GM12878 (cell line): ENCODE measurements at regions of chr17 and their contacts with region 1.

Region 1: GRCh38 chr17:42183741-42184711 is 1.2 kb downstream of the HCRT start:
- DNase-seq: peak; percentile 23
- ATAC-seq: peak; percentile 79
- H3K4me3 ChIP-seq: peak overlapping the region; percentile 76
- H3K27ac ChIP-seq: no peak overlapping the region; the same call in 1 of the 2 replicates
- H3K4me1 ChIP-seq: peaks cover 27% of the 10 kb centered on the region
- H3K27me3 ChIP-seq: no peaks in the 10 kb centered on the region
- CTCF ChIP-seq: peak; percentile 74 to 90 (median 89)
- EP300 ChIP-seq: no peak
- POLR2A ChIP-seq: peak; percentile 73
- RAD21 ChIP-seq: no peak

Region 2: DNA sequence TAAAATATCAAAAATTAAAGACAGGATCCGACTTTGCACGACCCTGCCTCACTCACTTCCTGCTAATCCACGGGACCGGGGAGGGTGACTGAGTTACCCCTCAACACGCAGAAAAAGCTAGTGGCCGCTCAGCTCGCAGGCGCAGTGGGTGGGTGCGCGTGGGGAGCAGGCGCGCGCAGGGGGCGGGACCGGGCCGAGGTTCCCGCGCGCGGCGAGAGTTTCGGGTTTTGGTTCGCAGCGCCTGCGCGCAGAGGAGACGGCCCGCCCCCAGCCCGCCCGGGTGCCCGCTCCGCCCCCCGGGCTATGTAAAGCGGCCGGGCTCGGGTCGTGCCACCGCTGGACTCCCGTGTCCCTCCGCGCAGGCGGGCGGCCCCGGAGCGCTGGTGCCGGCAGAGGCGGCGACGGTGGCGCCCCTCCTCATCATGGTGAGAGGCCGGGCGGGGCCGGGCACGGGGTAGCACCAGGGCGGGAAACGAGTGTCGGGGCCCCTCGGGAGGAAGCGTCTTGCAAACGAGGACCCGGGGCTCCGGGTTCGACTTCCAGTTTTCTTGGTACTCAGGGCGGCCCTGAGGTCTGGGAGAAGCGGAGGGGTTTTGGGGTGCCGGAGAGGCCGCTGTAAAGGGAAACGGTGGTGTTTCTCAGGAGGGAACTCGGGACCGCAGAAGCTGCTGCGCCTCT is 217.4 kb before region 1 on chr17 and contains the start of gene CNP:
- CTCF ChIA-PET with region 1: interaction called, 21 read pairs
- POLR2A ChIA-PET with region 1: interaction called, 3 read pairs
- RAD21 ChIA-PET with region 1: interaction called, 5 read pairs
- SMC1A ChIA-PET with region 1: interaction called, 6 read pairs
- in situ Hi-C with region 1: no loop called
- intact Hi-C with region 1: loop called (anchors 5 kb)
- DNase-seq: peak; percentile 49
- ATAC-seq: peak; percentile 91
- H3K4me3 ChIP-seq: peak within 1 kb of the TSS; percentile 79
- H3K27ac ChIP-seq: peak within 1 kb of the TSS; percentile 87
- H3K4me1 ChIP-seq: peaks cover 6% of the 10 kb centered on the region
- H3K27me3 ChIP-seq: no peaks in the 10 kb centered on the region
- CTCF ChIP-seq: no peak
- EP300 ChIP-seq: no peak
- POLR2A ChIP-seq: peak; percentile 92
- RAD21 ChIP-seq: no peak
- polyA plus RNA-seq, gene CNP: 1.8 to 4.4 TPM

Region 3: DNA sequence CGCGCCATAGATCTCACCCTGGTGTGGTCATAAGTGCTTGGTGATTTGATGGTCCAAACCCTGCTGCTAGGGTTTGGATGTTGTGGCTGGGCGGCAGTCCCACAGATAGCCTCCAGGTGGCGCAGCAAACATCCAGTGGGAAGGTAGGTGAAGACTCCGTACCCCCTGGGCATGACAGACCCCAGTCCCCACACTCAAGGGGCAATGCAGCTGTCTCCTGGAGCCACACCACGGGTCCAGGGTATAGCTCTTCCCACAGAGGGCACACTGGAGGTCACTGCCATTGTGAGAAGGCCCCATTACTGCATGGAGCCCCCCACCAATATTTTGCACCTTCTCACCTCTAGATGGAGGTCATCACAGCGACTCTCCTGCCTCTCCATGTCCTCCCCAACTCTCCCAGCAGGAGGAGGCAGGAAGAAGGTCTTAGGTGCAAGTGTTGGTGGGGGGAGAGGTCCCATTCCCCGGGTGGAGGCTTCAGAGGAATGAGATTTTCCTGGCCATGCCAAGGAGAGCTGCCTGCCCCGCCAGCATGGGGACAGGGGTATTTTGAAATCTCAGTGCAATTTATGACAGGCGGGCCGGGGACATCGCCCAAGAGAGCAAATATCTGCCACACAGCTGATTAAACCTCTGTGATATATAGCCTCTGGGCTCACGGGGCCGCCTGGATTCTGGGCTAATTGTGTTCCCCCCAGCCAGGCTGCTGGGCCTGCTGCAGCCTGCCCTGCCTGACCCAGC is 116.5 kb before region 1 on chr17:
- CTCF ChIA-PET with region 1: interaction called, 43 read pairs
- POLR2A ChIA-PET with region 1: no interaction called
- RAD21 ChIA-PET with region 1: interaction called, 4 read pairs
- SMC1A ChIA-PET with region 1: interaction called, 3 read pairs
- in situ Hi-C with region 1: no loop called
- intact Hi-C with region 1: loop called (anchors 2 kb)
- DNase-seq: no peak
- ATAC-seq: peak; percentile 70
- H3K4me3 ChIP-seq: no peak overlapping the region
- H3K27ac ChIP-seq: no peak overlapping the region
- H3K4me1 ChIP-seq: peaks cover 11% of the 10 kb centered on the region
- H3K27me3 ChIP-seq: peaks cover 3 to 7% of the 10 kb centered on the region in 2 experiments
- CTCF ChIP-seq: peak; percentile 89 to 95 (median 91)
- EP300 ChIP-seq: no peak
- POLR2A ChIP-seq: no peak
- RAD21 ChIP-seq: peak; percentile 56

Region 4: DNA sequence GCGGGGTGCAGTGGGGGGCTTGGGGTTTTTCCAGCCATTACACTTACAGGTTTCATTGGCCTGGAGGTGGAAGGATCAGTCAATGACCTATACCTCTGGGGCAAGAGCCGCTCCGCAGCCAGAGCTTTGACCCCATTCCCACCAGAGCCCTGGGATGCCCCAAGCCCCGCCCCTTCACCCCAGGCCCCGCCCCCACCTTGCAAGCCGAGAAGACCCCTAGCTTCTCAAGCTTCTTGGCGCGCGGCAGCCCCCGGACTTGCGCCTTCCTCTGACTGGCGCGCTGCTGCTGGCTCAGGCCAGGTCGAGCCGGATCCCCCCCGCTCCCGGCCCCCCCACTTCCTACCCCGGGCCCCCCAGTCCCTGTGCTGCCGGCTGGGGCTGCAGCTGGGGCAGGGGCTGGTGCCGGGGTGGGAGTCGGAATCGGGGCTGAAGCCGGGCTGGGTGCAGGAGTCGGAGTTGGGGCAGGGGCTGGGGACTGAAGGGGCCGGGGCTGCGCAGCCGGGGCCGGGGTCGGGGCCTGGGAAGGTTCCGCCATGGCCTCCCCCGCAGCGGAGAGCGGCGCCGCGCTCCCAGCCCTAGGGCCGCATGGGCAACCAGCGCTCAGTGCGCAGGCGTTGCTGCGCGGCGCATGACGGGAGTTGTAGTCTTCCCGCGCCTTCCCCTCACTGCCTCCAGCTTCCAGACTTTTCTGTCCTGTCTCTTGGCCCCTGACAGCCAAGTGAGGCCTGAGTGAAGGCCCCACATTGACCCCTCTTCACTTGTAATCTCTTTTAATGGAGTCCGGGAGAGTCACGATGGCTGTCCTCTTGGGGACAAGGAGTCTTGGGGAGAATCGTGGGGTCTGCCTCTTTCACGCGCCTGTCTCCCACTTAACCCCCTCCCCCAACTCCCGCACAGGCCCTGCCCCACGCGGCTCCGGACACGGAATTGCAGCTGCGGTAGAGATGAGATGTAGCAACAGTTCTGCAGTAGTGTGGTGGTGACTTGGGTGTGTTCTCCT is 63.0 kb before region 1 on chr17 and contains the start of gene KAT2A:
- CTCF ChIA-PET with region 1: interaction called, 138 read pairs
- POLR2A ChIA-PET with region 1: interaction called, 15 read pairs
- RAD21 ChIA-PET with region 1: interaction called, 78 read pairs
- SMC1A ChIA-PET with region 1: interaction called, 53 read pairs
- in situ Hi-C with region 1: no loop called
- intact Hi-C with region 1: loop called (anchors 1 kb)
- DNase-seq: no peak
- ATAC-seq: peak; percentile 94
- H3K4me3 ChIP-seq: peak within 1 kb of the TSS; percentile 82
- H3K27ac ChIP-seq: no peak within 1 kb of the TSS
- H3K4me1 ChIP-seq: peaks cover 5% of the 10 kb centered on the region
- H3K27me3 ChIP-seq: no peaks in the 10 kb centered on the region
- CTCF ChIP-seq: no peak
- EP300 ChIP-seq: no peak
- POLR2A ChIP-seq: peak; percentile 91
- RAD21 ChIP-seq: no peak
- polyA plus RNA-seq, gene KAT2A: 0.85 to 3.0 TPM

Region 5: DNA sequence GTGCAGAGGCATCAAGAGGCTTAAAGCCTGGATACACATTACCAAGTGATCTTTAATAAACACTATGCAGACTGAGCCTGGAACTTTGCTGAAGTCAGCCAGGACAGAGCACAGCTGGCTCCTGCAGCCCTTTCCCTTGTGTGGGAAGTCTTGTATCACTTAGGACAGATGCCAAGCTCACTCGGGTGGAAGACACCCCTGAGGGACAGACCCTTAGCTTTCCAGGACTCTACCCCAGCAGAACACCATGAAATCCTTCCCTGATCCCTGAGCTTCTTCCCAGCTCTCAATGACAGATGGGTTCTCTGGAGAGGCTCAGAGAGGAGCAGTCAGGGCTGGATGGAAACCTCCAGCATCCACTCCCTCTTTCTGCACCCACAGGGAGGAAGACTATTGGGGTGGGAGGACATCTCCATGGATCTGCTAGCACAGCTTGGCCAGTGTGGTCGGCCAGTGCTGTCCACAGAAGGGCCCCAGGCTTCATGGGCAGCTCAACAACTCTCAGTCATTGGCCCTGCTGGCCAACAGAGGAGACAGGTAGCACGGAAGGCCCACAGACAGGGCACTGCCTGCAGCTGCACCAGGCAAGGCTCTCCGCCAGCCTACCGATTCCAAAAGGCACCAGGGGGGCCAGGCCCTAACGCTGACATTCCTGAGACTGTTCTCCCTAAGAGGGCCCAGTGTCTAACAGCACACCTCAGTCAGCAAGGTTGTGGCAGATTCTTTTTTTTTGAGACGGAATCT is 45.1 kb before region 1 on chr17:
- CTCF ChIA-PET with region 1: interaction called, 12 read pairs
- POLR2A ChIA-PET with region 1: no interaction called
- RAD21 ChIA-PET with region 1: interaction called, 10 read pairs
- SMC1A ChIA-PET with region 1: interaction called, 4 read pairs
- in situ Hi-C with region 1: no loop called
- intact Hi-C with region 1: no loop called
- DNase-seq: no peak
- ATAC-seq: no peak
- H3K4me3 ChIP-seq: no peak overlapping the region
- H3K27ac ChIP-seq: no peak overlapping the region
- H3K4me1 ChIP-seq: peaks cover 5% of the 10 kb centered on the region
- H3K27me3 ChIP-seq: no peaks in the 10 kb centered on the region
- CTCF ChIP-seq: no peak
- EP300 ChIP-seq: no peak
- POLR2A ChIP-seq: 0 out of 2 replicates have a peak, but pooled peaks have one; percentile 23
- RAD21 ChIP-seq: no peak

Region 6: GRCh38 chr17:42163113-42163512 is 20.9 kb before region 1 on chr17:
- CTCF ChIA-PET with region 1: interaction called, 33 read pairs
- POLR2A ChIA-PET with region 1: interaction called, 4 read pairs
- RAD21 ChIA-PET with region 1: interaction called, 4 read pairs
- SMC1A ChIA-PET with region 1: interaction called, 11 read pairs
- in situ Hi-C with region 1: no loop called
- intact Hi-C with region 1: no loop called
- DNase-seq: no peak
- ATAC-seq: peak; percentile 67
- H3K4me3 ChIP-seq: no peak overlapping the region
- H3K27ac ChIP-seq: no peak overlapping the region
- H3K4me1 ChIP-seq: peaks cover 9% of the 10 kb centered on the region
- H3K27me3 ChIP-seq: no peaks in the 10 kb centered on the region
- CTCF ChIP-seq: peak; percentile 24 to 66 (median 66); a peak in 5 of 6 replicates
- EP300 ChIP-seq: no peak
- POLR2A ChIP-seq: no peak
- RAD21 ChIP-seq: no peak

Region 7: GRCh38 chr17:42287926-42288802 is 104.1 kb after region 1 on chr17 and contains the start of gene STAT5A:
- CTCF ChIA-PET with region 1: interaction called, 5 read pairs
- POLR2A ChIA-PET with region 1: interaction called, 4 read pairs
- RAD21 ChIA-PET with region 1: interaction called, 4 read pairs
- SMC1A ChIA-PET with region 1: no interaction called
- in situ Hi-C with region 1: no loop called
- intact Hi-C with region 1: loop called (anchors 5 kb)
- DNase-seq: no peak
- ATAC-seq: peak; percentile 85
- H3K4me3 ChIP-seq: peak within 1 kb of the TSS; percentile 91
- H3K27ac ChIP-seq: peak within 1 kb of the TSS; percentile 79
- H3K4me1 ChIP-seq: peaks cover 23% of the 10 kb centered on the region
- H3K27me3 ChIP-seq: no peaks in the 10 kb centered on the region
- CTCF ChIP-seq: no peak
- EP300 ChIP-seq: no peak
- POLR2A ChIP-seq: peak; percentile 80
- RAD21 ChIP-seq: no peak
- polyA plus RNA-seq, gene STAT5A: 14.8 to 24.0 TPM